CD8-positive, alpha-beta memory T cell (primary cell): ENCODE measurements at regions of chr1 and their contacts with region 1.

Region 1: GRCh38 chr1:225441314-225442122 is 13.7 kb upstream of the LBR start:
- DNase-seq: no peak
- H3K4me3 ChIP-seq: no peak overlapping the region
- H3K4me3 Mint-ChIP-seq: peak overlapping the region in 5 of 7 donors; percentile 33 to 66 (median 51)
- H3K27ac ChIP-seq: no peak overlapping the region
- H3K27ac Mint-ChIP-seq: peak overlapping the region; percentile 55 to 96 (median 75)
- H3K4me1 ChIP-seq: peaks cover 52% of the 10 kb centered on the region
- H3K4me1 Mint-ChIP-seq: peaks cover 46 to 56% (median 55%) of the 10 kb centered on the region in 3 donors
- H3K27me3 ChIP-seq: no peaks in the 10 kb centered on the region
- H3K27me3 Mint-ChIP-seq: no peaks in the 10 kb centered on the region

Region 2: GRCh38 chr1:225428068-225428880 is 13.2 kb before region 1 on chr1:
- CTCF ChIA-PET with region 1: interaction called, 35 read pairs
- POLR2A ChIA-PET with region 1: interaction called, 98 read pairs
- DNase-seq: peak; percentile 88 to 95 (median 89)
- H3K4me3 ChIP-seq: peak overlapping the region; percentile 88
- H3K4me3 Mint-ChIP-seq: peak overlapping the region; percentile 86 to 95 (median 91)
- H3K27ac ChIP-seq: peak overlapping the region; percentile 86
- H3K27ac Mint-ChIP-seq: peak overlapping the region; percentile 87 to 96 (median 93)
- H3K4me1 ChIP-seq: peaks cover 41% of the 10 kb centered on the region
- H3K4me1 Mint-ChIP-seq: peaks cover 42 to 46% (median 46%) of the 10 kb centered on the region in 3 donors
- H3K27me3 ChIP-seq: no peaks in the 10 kb centered on the region
- H3K27me3 Mint-ChIP-seq: no peaks in the 10 kb centered on the region

Region 3: GRCh38 chr1:225460737-225461562 is 19.4 kb after region 1 on chr1:
- CTCF ChIA-PET with region 1: interaction called, 11 read pairs
- POLR2A ChIA-PET with region 1: interaction called, 10 read pairs
- DNase-seq: peak; percentile 21 to 86 (median 64)
- H3K4me3 ChIP-seq: peak overlapping the region; percentile 27
- H3K4me3 Mint-ChIP-seq: peak overlapping the region in 6 of 7 donors; percentile 4 to 73 (median 36)
- H3K27ac ChIP-seq: no peak overlapping the region
- H3K27ac Mint-ChIP-seq: peak overlapping the region; percentile 65 to 96 (median 83)
- H3K4me1 ChIP-seq: peaks cover 33% of the 10 kb centered on the region
- H3K4me1 Mint-ChIP-seq: peaks cover 46 to 64% (median 53%) of the 10 kb centered on the region in 3 donors
- H3K27me3 ChIP-seq: no peaks in the 10 kb centered on the region
- H3K27me3 Mint-ChIP-seq: peaks cover 0 to 3% of the 10 kb centered on the region in 2 donors

Region 4: DNA sequence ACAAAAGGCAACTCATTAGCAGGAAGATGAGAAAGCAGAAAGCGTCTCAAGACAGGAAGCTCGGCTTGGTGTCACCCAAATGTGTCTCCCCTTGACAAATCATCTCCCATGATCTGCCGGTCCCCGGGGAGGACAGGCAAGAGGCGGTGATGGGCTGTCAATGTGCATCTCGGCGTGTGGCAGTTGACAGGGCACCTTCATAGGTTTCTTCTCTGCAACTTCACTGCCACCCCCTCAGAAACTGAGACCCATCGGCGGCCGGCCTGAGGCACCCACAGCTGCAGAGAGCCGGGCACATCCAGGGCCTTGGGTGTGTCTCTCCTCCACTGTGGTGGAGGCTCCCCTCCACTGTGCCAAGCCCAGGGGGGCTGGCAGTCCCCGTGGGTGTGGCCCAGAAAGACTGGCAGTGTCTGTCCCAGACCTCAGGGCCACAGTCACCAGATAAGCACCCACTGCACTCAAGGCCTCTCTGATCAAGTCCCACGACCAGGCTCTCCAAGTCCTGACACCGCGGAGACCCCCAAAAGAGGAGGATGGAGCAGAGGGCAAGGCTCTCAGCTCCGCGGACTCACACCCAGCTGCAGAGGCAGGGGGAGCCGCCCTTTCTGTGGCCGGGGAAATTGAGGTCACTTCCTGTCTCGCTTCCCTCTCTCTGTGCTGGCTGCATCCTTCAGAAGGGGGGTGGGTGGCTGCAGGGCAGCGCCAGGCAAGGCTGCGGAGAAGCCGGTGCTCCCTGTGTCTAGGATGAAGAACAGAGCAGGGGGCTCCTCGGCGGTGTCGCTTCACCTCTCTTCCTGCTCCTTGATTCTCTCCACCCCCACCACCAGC is 25.9 kb after region 1 on chr1:
- CTCF ChIA-PET with region 1: interaction called, 14 read pairs
- POLR2A ChIA-PET with region 1: interaction called, 48 read pairs
- DNase-seq: peak; percentile 73 to 88 (median 86)
- H3K4me3 ChIP-seq: peak overlapping the region; percentile 84
- H3K4me3 Mint-ChIP-seq: peak overlapping the region; percentile 88 to 96 (median 92)
- H3K27ac ChIP-seq: peak overlapping the region; percentile 90
- H3K27ac Mint-ChIP-seq: peak overlapping the region; percentile 92 to 100 (median 98)
- H3K4me1 ChIP-seq: peaks cover 29% of the 10 kb centered on the region
- H3K4me1 Mint-ChIP-seq: peaks cover 47 to 65% (median 55%) of the 10 kb centered on the region in 3 donors
- H3K27me3 ChIP-seq: no peaks in the 10 kb centered on the region
- H3K27me3 Mint-ChIP-seq: peaks cover 0 to 3% of the 10 kb centered on the region in 2 donors

Region 5: DNA sequence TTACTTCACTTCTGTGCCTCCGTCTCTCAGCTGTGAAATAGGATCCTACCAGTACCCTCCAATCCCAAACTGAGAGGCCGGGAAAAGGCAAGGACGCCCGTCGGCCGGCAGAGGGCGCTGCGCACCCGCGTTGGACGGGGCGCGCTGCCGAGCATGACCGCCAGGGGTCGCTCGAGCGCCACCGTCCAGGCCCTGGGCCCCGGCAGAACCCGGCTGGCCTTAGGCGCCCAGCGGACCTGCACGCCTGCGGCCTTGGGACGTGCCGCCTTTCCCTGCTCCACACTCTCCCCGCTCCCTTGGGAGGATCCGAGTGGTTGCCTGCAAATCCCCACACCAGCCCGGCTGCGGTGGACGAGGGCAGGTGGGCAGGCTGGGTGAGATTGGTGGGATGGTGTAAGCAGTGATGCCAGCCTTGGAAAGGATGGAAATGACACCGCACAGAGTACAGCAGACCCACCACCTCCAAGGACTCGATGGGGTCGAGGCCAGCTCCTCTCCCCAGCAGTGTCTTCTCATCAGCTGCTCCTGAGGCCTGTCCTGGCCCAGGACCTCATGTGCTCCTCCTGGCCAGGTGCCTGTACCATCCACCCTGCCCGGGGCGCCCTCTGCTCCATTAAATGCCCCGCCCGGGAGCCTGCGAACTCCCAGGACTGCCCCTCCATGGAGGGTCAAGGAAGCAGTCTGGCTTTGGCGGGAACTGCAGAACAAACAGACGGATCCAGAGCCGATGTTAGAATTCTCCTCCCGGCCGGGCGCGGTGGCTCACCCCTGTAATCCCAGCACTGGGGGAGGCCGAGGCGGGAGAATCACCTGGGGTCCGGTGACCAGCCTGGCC is 33.7 kb after region 1 on chr1:
- CTCF ChIA-PET with region 1: interaction called, 10 read pairs
- POLR2A ChIA-PET with region 1: no interaction called
- DNase-seq: peak; percentile 53 to 74 (median 66)
- H3K4me3 ChIP-seq: no peak overlapping the region
- H3K4me3 Mint-ChIP-seq: no peak overlapping the region
- H3K27ac ChIP-seq: no peak overlapping the region
- H3K27ac Mint-ChIP-seq: peak overlapping the region in 4 of 8 donors; percentile 24 to 74 (median 60)
- H3K4me1 ChIP-seq: peaks cover 36% of the 10 kb centered on the region
- H3K4me1 Mint-ChIP-seq: peaks cover 37 to 48% (median 43%) of the 10 kb centered on the region in 3 donors
- H3K27me3 ChIP-seq: no peaks in the 10 kb centered on the region
- H3K27me3 Mint-ChIP-seq: no peaks in the 10 kb centered on the region